HCT116 (cell line): ENCODE measurements at regions of chr6 and their contacts with region 1.

Region 1: GRCh38 chr6:44655412-44656342 is 268.2 kb downstream of the CDC5L start:
- DNase-seq: peak; percentile 23
- ATAC-seq: peak; percentile 92
- H3K4me3 ChIP-seq: peak overlapping the region in 1 of 2 experiments; percentile 25; a peak in 1 of 4 replicates
- H3K27ac ChIP-seq: no peak overlapping the region
- H3K4me1 ChIP-seq: peaks cover 0 to 8% of the 10 kb centered on the region in 2 experiments; a peak in 2 of 4 replicates
- H3K27me3 ChIP-seq: no peaks in the 10 kb centered on the region
- CTCF ChIP-seq: peak; percentile 69 to 98 (median 93); a peak in 5 of 6 replicates
- POLR2A ChIP-seq: no peak
- RAD21 ChIP-seq: peak; percentile 97

Region 2: GRCh38 chr6:44667668-44668390 is 12.2 kb after region 1 on chr6:
- CTCF ChIA-PET with region 1: interaction called, 10 read pairs
- POLR2A ChIA-PET with region 1: interaction called, 3 read pairs
- RAD21 ChIA-PET with region 1: no interaction called
- intact Hi-C with region 1: no loop called
- DNase-seq: peak; percentile 29
- ATAC-seq: peak; percentile 89
- H3K4me3 ChIP-seq: no peak overlapping the region
- H3K27ac ChIP-seq: no peak overlapping the region
- H3K4me1 ChIP-seq: peaks cover 17 to 31% of the 10 kb centered on the region in 2 experiments
- H3K27me3 ChIP-seq: no peaks in the 10 kb centered on the region
- CTCF ChIP-seq: peak; percentile 29 to 87 (median 74); a peak in 5 of 6 replicates
- POLR2A ChIP-seq: no peak
- RAD21 ChIP-seq: peak; percentile 55

Region 3: DNA sequence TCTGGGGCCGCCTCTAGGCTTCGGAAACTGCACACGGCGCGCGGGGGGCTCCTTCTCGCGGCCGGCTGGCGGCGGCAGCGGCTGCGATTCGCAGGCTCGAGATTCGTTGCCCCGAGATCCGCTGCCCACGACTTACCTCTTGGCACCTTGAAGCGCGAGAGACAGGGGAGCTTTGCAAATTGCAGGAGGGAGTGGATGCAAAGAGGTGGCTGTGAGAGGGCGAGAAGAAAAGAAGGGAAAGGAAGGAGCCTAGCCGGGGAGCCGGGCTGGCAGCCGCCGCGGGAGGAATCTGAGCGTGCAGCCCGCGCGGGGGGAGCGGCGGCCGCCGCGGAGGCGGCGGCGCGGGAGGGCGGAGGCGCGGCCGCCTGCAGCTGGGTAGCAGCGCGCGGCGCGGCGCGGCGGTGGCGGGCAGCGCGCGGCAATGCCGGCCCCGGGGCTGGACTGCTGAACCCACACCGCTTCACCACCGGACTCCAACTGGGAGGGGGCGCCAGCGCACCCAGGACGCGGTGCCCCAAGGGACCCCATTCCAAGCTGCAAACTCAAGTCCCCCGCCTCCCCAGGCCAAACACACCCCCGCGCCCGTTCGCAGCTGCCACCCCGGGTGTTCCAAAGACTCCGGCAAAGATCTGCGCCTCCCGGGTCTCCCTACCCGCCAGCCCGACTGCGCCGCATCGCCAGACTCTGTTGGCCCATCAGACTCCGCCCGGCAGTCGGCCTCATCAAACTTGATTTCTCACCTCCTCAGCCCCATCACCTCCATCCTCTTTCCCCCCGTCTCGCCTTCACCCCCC is 766.2 kb after region 1 on chr6:
- CTCF ChIA-PET with region 1: interaction called, 14 read pairs
- POLR2A ChIA-PET with region 1: no interaction called
- RAD21 ChIA-PET with region 1: interaction called in 1 of 2 experiments, 6 read pairs
- intact Hi-C with region 1: loop called (anchors 2 kb)
- DNase-seq: no peak
- ATAC-seq: peak; percentile 64
- H3K4me3 ChIP-seq: peak overlapping the region; percentile 53 to 73
- H3K27ac ChIP-seq: peak overlapping the region; percentile 33; the same call in 1 of the 2 replicates
- H3K4me1 ChIP-seq: peaks cover 8 to 36% of the 10 kb centered on the region in 2 experiments
- H3K27me3 ChIP-seq: peaks cover 18% of the 10 kb centered on the region
- CTCF ChIP-seq: peak in 2 of 3 experiments; percentile 14 to 15; a peak in 2 of 6 replicates
- POLR2A ChIP-seq: no peak
- RAD21 ChIP-seq: peak; percentile 41

Region 4: GRCh38 chr6:45922728-45923351 is 1267.2 kb after region 1 on chr6:
- CTCF ChIA-PET with region 1: interaction called, 80 read pairs
- POLR2A ChIA-PET with region 1: interaction called, 3 read pairs
- RAD21 ChIA-PET with region 1: interaction called, 7 to 15 read pairs
- intact Hi-C with region 1: loop called (anchors 1 kb)
- DNase-seq: peak; percentile 52
- ATAC-seq: peak; percentile 93
- H3K4me3 ChIP-seq: no peak overlapping the region
- H3K27ac ChIP-seq: no peak overlapping the region
- H3K4me1 ChIP-seq: no peaks in the 10 kb centered on the region
- H3K27me3 ChIP-seq: no peaks in the 10 kb centered on the region
- CTCF ChIP-seq: peak; percentile 67 to 88 (median 81)
- POLR2A ChIP-seq: no peak
- RAD21 ChIP-seq: peak; percentile 95